PC-9 (cell line): ENCODE measurements at regions of chr6 and their contacts with region 1.

Region 1: GRCh38 chr6:20236909-20237600 is 24.8 kb upstream of the MBOAT1 start:
- DNase-seq: peak in 1 of 2 experiments; percentile 71
- H3K4me3 ChIP-seq: no peak overlapping the region
- H3K27ac ChIP-seq: peak overlapping the region; percentile 37
- H3K4me1 ChIP-seq: peaks cover 19% of the 10 kb centered on the region
- H3K27me3 ChIP-seq: no peaks in the 10 kb centered on the region
- CTCF ChIP-seq: no peak

Region 2: GRCh38 chr6:20266851-20267608 is 30.0 kb after region 1 on chr6:
- CTCF ChIA-PET with region 1: no interaction called
- POLR2A ChIA-PET with region 1: interaction called, 13 read pairs
- intact Hi-C with region 1: loop called (anchors 2 kb)
- DNase-seq: peak; percentile 57 to 60
- H3K4me3 ChIP-seq: no peak overlapping the region
- H3K27ac ChIP-seq: peak overlapping the region; percentile 40
- H3K4me1 ChIP-seq: peaks cover 13% of the 10 kb centered on the region
- H3K27me3 ChIP-seq: no peaks in the 10 kb centered on the region
- CTCF ChIP-seq: no peak

Region 3: GRCh38 chr6:20291764-20292580 is 54.9 kb after region 1 on chr6:
- CTCF ChIA-PET with region 1: no interaction called
- POLR2A ChIA-PET with region 1: interaction called, 7 read pairs
- intact Hi-C with region 1: loop called (anchors 1 kb)
- DNase-seq: peak; percentile 53 to 71
- H3K4me3 ChIP-seq: no peak overlapping the region
- H3K27ac ChIP-seq: no peak overlapping the region
- H3K4me1 ChIP-seq: no peaks in the 10 kb centered on the region
- H3K27me3 ChIP-seq: no peaks in the 10 kb centered on the region
- CTCF ChIP-seq: peak; percentile 95